ENCODE measurements at regions of chr12 and their contacts with region 1.

Region 1: GRCh38 chr12:15789220-15790171 is at the start of gene EPS8:
- DNase-seq: peak; percentile 84 to 98 (median 91)

Region 2: GRCh38 chr12:15693228-15693911 is 96.1 kb before region 1 on chr12:
- intact Hi-C with region 1: loop called (anchors 5 kb)
- DNase-seq: no peak

Region 3: DNA sequence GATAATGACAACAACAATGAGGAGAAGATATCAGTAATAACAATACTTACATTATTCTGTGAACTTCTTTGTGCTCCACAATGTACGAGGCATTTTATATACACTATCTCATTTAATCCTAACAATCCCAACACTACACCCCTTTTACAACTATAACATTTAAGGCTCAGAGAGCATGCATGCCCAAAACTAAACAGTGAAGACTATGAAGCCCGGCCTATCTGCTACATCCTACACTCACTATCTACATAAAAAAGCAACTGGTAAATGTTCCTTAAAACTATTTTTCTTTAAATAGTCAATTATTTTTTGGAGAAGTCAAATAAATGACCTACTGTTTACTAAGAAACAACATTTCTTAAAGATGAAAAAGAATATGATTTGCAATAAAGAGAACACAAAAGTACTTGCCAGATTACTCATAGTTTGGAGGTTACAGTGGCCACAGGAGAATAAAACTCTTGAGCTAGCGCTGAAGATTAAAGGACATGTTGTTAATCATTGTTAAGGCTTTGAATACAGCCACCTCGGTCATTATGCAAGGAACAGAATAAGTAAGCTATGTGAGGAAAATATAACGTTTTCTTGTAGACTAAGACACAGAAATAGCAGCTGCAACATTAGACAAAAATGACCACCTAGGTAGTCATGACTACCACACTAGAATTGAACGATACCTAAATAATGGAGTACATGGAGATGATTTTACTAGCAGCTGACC is 57.0 kb before region 1 on chr12:
- intact Hi-C with region 1: no loop called
- DNase-seq: no peak